GM18951 (cell line): ENCODE measurements at regions of chr5 and their contacts with region 1.

Region 1: GRCh38 chr5:149636851-149637246 is 55.6 kb downstream of the ARHGEF37 start:
- POLR2A ChIP-seq: no peak

Region 2: GRCh38 chr5:148543727-148544126 is 1093.1 kb before region 1 on chr5:
- in situ Hi-C with region 1: no loop called
- POLR2A ChIP-seq: no peak

Region 3: GRCh38 chr5:149834246-149834855 is 197.5 kb after region 1 on chr5:
- in situ Hi-C with region 1: loop called (anchors 10 kb)
- POLR2A ChIP-seq: no peak

Region 4: GRCh38 chr5:149988126-149988525 is 351.3 kb after region 1 on chr5:
- in situ Hi-C with region 1: loop called (anchors 5 kb)
- POLR2A ChIP-seq: no peak